ENCODE measurements at regions of chr12 and their contacts with region 1.

Region 1: DNA sequence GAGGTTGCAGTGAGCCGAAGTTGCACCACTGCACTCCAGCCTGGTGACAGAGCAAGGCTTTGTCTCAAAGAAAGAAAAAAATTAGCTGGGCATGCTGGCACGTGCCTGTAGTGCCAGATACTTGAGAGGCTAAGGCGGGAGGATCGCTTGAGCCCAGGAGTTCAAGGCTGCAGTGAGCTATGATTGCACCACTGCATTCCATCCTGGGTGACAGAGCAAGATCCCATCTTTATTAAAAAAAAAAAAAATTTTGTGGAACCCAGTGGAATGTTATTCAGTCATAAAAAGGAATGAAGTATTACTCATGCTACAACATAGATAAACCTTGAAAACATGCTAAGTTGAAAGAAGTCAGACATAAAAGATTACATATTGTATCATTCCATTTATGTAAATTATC is 8.3 kb upstream of the ERBB3 start:
- DNase-seq: no peak
- ATAC-seq: no peak
- H3K4me3 ChIP-seq: no peak overlapping the region
- H3K4me3 Mint-ChIP-seq: no peak overlapping the region
- H3K27ac ChIP-seq: no peak overlapping the region
- H3K27ac Mint-ChIP-seq: no peak overlapping the region
- H3K4me1 ChIP-seq: no peaks in the 10 kb centered on the region
- H3K4me1 Mint-ChIP-seq: no peaks in the 10 kb centered on the region
- H3K27me3 ChIP-seq: peaks cover 0 to 2% of the 10 kb centered on the region in 2 experiments
- H3K27me3 Mint-ChIP-seq: no peaks in the 10 kb centered on the region

Region 2: DNA sequence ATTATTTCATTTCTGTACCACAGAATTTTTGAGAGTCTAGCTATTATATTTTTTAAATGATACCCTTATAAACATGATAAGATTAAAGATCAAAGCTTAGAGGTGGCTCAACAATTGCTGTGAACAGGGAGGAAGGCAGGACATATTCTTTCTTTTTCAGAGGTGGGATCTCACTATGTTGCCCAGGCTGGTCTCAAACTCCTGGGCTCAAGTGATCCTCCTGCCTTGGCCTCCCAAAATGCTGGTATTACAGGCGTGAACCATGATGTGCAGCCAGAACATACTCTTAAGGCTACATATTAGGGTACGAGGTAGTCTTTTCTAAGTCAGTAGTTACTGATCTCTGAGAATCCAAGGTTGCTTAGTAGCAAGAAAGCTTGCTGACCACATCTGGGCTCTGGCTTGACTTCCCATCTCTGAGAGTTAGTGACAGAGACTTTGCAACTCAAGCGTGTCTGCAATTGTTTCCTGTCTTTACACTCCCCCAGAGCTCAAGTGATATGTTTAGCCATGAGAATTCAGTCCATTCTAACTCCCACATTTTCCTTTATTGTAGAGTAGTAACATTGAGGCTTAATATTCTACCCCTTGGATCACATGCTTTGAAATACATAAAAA is 89.2 kb before region 1 on chr12:
- CTCF ChIA-PET with region 1: interaction called in 1 of 2 experiments, 10 read pairs
- POLR2A ChIA-PET with region 1: interaction called in 1 of 2 experiments, 8 read pairs
- DNase-seq: no peak
- ATAC-seq: no peak
- H3K4me3 ChIP-seq: no peak overlapping the region
- H3K4me3 Mint-ChIP-seq: no peak overlapping the region
- H3K27ac ChIP-seq: no peak overlapping the region
- H3K27ac Mint-ChIP-seq: no peak overlapping the region
- H3K4me1 ChIP-seq: peaks cover 0 to 5% of the 10 kb centered on the region in 2 experiments
- H3K4me1 Mint-ChIP-seq: peaks cover 28 to 33% (median 29%) of the 10 kb centered on the region in 3 donors
- H3K27me3 ChIP-seq: no peaks in the 10 kb centered on the region
- H3K27me3 Mint-ChIP-seq: no peaks in the 10 kb centered on the region

Region 3: GRCh38 chr12:56258057-56258819 is 186.6 kb after region 1 on chr12 and contains the start of gene ANKRD52:
- CTCF ChIA-PET with region 1: no interaction called
- POLR2A ChIA-PET with region 1: no interaction called
- DNase-seq: peak; percentile 47 to 93 (median 73)
- ATAC-seq: peak; percentile 94 to 97 (median 96)
- H3K4me3 ChIP-seq: peak within 1 kb of the TSS; percentile 77 to 82
- H3K4me3 Mint-ChIP-seq: peak within 1 kb of the TSS; percentile 81 to 92 (median 90)
- H3K27ac ChIP-seq: peak within 1 kb of the TSS; percentile 71
- H3K27ac Mint-ChIP-seq: peak within 1 kb of the TSS; percentile 86 to 90
- H3K4me1 ChIP-seq: peaks cover 7 to 27% of the 10 kb centered on the region in 2 experiments
- H3K4me1 Mint-ChIP-seq: peaks cover 20 to 25% (median 24%) of the 10 kb centered on the region in 3 donors
- H3K27me3 ChIP-seq: no peaks in the 10 kb centered on the region
- H3K27me3 Mint-ChIP-seq: no peaks in the 10 kb centered on the region
- total RNA-seq, gene ANKRD52: 35.8 to 51.0 (median 43.1) TPM

Region 4: GRCh38 chr12:56724972-56725722 is 653.5 kb after region 1 on chr12 and contains the start of gene NACA:
- CTCF ChIA-PET with region 1: no interaction called
- POLR2A ChIA-PET with region 1: no interaction called
- DNase-seq: peak; percentile 86 to 100 (median 98)
- ATAC-seq: peak; percentile 94 to 97 (median 96)
- H3K4me3 ChIP-seq: peak within 1 kb of the TSS; percentile 89 to 97
- H3K4me3 Mint-ChIP-seq: peak within 1 kb of the TSS; percentile 96 to 99 (median 98)
- H3K27ac ChIP-seq: peak within 1 kb of the TSS; percentile 90
- H3K27ac Mint-ChIP-seq: peak within 1 kb of the TSS; percentile 90 to 97
- H3K4me1 ChIP-seq: peaks cover 34 to 44% of the 10 kb centered on the region in 2 experiments
- H3K4me1 Mint-ChIP-seq: peaks cover 49 to 60% (median 55%) of the 10 kb centered on the region in 3 donors
- H3K27me3 ChIP-seq: no peaks in the 10 kb centered on the region
- H3K27me3 Mint-ChIP-seq: no peaks in the 10 kb centered on the region
- total RNA-seq, gene NACA: 1,098 to 1,258 (median 1,167) TPM

Measured in T-cell (primary cell).